ENCODE measurements at regions of chr3 and their contacts with region 1.

Region 1: GRCh38 chr3:98039322-98040024 is 4.4 kb upstream of the GABRR3 start:
- DNase-seq: no peak
- H3K4me3 ChIP-seq: peak overlapping the region in 5 of 8 donors; percentile 17 to 61 (median 22)
- H3K27ac ChIP-seq: peak overlapping the region in 1 of 8 donors; percentile 45
- H3K4me1 ChIP-seq: peaks cover 0 to 8% (median 3%) of the 10 kb centered on the region in 6 donors
- H3K27me3 ChIP-seq: peaks cover 0 to 40% (median 4%) of the 10 kb centered on the region in 7 donors
- CTCF ChIP-seq: peak; percentile 73 to 91 (median 88)
- POLR2A ChIP-seq: no peak

Region 2: DNA sequence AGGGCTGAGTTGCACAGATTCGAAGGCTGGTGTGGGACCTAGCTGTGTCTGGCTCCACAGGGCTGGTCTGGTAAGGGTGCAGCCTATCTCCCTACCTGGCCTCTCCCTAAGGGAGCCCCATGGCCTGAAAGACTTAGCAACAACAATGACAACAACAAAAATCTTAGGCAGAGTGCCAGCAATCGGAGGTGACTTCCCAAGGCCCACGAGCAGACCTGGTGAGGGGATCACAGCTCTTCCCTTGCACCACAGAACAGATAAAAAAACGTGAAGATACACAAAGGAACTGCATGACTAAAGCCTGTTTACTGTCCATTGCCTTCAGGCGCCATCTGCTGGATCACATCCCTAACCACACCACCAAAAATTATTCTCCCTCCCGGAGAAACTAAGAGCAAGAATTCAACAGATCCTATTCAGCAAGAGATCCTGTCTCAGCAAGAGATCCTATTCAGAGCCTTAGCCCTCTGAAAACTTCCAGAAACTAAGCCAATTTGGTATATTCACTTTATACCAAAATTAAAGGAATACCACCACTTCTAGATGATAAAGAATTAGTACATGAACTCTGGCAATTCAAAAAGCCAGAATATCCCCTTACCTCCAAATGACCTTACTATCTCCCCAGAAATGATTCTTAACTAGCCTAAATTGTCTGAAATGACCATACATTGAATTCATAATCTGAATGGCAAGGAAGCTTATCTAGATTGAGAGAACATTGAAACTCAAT is 290.1 kb after region 1 on chr3:
- intact Hi-C with region 1: loop called (anchors 5 kb)
- DNase-seq: no peak
- H3K4me3 ChIP-seq: no peak overlapping the region
- H3K27ac ChIP-seq: no peak overlapping the region
- H3K4me1 ChIP-seq: no peaks in the 10 kb centered on the region
- H3K27me3 ChIP-seq: peaks cover 0 to 23% (median 0%) of the 10 kb centered on the region in 7 donors
- CTCF ChIP-seq: peak in 8 of 11 experiments; percentile 21 to 58 (median 48)
- POLR2A ChIP-seq: no peak

Measured in spleen (tissue), 13 donors.